SK-N-SH (cell line): ENCODE measurements at regions of chr5 and their contacts with region 1.

Region 1: DNA sequence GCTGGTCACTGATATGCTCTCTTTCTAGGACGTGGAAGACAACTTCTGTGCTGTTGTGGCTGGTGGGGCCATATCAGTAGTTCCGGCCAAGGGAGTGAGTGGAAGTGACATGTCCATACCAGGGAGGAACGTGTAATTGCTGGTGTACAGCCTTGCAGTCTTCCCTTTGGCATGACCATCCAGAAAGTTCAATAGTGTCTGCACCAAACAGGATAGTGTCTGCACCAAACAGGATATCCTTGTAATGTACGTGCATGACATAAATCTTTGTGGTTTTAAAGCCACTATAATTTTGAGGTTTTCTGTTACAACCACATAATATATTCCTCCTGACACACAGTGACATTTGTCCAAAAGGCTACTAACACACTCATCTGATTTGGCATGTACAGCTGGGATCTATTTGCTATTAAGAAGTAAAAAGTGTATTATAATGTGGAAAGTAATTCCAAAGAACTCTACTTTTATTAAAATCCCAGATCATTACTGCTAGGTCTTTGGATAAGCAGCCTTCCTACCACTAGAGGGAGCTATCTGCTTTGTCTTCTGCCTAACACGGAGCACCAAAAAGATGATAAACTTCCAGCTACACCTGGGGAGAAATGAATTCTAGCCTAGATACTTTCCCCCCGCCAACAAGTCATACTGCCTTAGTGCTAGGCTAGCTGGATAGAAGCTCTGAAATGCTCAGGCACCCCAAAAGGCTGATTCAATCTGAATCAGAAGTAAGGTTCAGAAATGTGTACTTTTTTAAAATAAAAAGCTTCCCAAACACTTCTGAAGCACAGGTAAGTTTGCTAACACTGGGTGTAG is 52.7 kb downstream of the RNF145 start:
- DNase-seq: peak; percentile 68
- H3K4me3 ChIP-seq: peak overlapping the region in 1 of 2 experiments; percentile 27; a peak in 1 of 4 replicates
- H3K27ac ChIP-seq: no peak overlapping the region
- H3K4me1 ChIP-seq: peaks cover 0 to 18% of the 10 kb centered on the region in 2 experiments; a peak in 3 of 4 replicates
- H3K27me3 ChIP-seq: no peaks in the 10 kb centered on the region
- CTCF ChIP-seq: peak; percentile 94
- EP300 ChIP-seq: no peak
- RAD21 ChIP-seq: peak; percentile 91

Region 2: GRCh38 chr5:159094745-159095144 is 61.9 kb before region 1 on chr5:
- CTCF ChIA-PET with region 1: no interaction called
- POLR2A ChIA-PET with region 1: no interaction called
- DNase-seq: peak; percentile 57
- H3K4me3 ChIP-seq: no peak overlapping the region
- H3K27ac ChIP-seq: no peak overlapping the region
- H3K4me1 ChIP-seq: peaks cover 5 to 9% of the 10 kb centered on the region in 2 experiments; a peak in 3 of 4 replicates
- H3K27me3 ChIP-seq: no peaks in the 10 kb centered on the region
- CTCF ChIP-seq: no peak
- EP300 ChIP-seq: no peak
- RAD21 ChIP-seq: no peak

Region 3: GRCh38 chr5:159171274-159171673 is 14.6 kb after region 1 on chr5:
- CTCF ChIA-PET with region 1: interaction called, 28 read pairs
- POLR2A ChIA-PET with region 1: no interaction called
- DNase-seq: no peak
- H3K4me3 ChIP-seq: no peak overlapping the region
- H3K27ac ChIP-seq: no peak overlapping the region
- H3K4me1 ChIP-seq: peaks cover 0 to 13% of the 10 kb centered on the region in 2 experiments; a peak in 2 of 4 replicates
- H3K27me3 ChIP-seq: no peaks in the 10 kb centered on the region
- CTCF ChIP-seq: no peak
- EP300 ChIP-seq: no peak
- RAD21 ChIP-seq: no peak

Region 4: GRCh38 chr5:159207686-159208513 is 51.3 kb after region 1 on chr5:
- CTCF ChIA-PET with region 1: interaction called, 15 read pairs
- POLR2A ChIA-PET with region 1: interaction called, 3 read pairs
- DNase-seq: peak; percentile 84
- H3K4me3 ChIP-seq: peak overlapping the region; percentile 78 to 88
- H3K27ac ChIP-seq: peak overlapping the region; percentile 90 to 98
- H3K4me1 ChIP-seq: peaks cover 19 to 51% of the 10 kb centered on the region in 2 experiments; a peak in 3 of 4 replicates
- H3K27me3 ChIP-seq: no peaks in the 10 kb centered on the region
- CTCF ChIP-seq: no peak
- EP300 ChIP-seq: 0 out of 4 replicates have a peak, but pooled peaks of 1 of the 2 experiments have one; percentile 62
- RAD21 ChIP-seq: no peak; the same call in 1 of the 2 replicates

Region 5: GRCh38 chr5:159274676-159275075 is 118.0 kb after region 1 on chr5:
- CTCF ChIA-PET with region 1: interaction called, 10 read pairs
- POLR2A ChIA-PET with region 1: no interaction called
- DNase-seq: no peak
- H3K4me3 ChIP-seq: no peak overlapping the region
- H3K27ac ChIP-seq: no peak overlapping the region
- H3K4me1 ChIP-seq: no peaks in the 10 kb centered on the region
- H3K27me3 ChIP-seq: no peaks in the 10 kb centered on the region
- CTCF ChIP-seq: no peak
- EP300 ChIP-seq: no peak
- RAD21 ChIP-seq: no peak

Region 6: DNA sequence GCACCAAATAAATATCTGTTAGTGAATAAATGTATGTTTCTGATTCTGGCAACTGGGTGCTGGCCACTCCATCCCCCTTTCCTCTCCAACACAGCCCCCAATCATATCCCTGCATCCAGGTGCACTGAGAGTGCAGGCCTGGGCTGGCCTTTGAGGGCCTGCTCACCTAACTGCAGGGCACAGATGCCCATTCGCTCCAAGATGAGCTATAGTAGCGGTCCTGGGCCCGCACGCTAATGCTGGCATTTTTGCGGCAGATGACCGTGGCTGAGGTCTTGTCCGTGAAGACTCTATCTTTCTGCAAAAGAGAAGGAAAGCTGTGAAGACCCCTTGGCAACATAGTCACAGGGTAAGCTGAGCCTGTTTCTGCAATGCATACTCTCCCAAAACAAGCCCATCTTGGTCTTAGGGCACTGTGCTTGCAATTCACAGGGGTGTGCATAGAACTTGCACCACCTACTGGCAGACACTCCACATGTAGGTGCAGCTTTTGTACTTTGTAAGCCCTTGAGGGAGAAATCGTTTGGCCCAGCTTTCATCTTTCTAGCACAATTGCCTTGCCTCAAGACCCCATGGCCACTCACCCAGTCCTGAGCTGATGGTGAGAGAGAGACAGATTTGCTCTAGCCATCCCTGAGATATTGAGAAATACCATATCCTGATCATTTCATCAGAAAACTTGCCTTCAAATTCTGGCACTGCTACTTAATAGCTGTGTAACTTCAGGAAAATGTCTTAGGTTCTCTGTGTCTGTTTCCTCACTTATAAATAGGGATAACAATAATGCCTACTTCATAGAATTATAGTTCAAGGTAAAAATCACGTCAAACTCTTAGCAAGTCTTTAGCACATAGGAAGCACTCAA is 160.1 kb after region 1 on chr5:
- CTCF ChIA-PET with region 1: interaction called, 71 read pairs
- POLR2A ChIA-PET with region 1: interaction called, 3 read pairs
- DNase-seq: peak; percentile 66
- H3K4me3 ChIP-seq: no peak overlapping the region
- H3K27ac ChIP-seq: no peak overlapping the region
- H3K4me1 ChIP-seq: peaks cover 0 to 15% of the 10 kb centered on the region in 2 experiments; a peak in 2 of 4 replicates
- H3K27me3 ChIP-seq: peaks cover 4% of the 10 kb centered on the region; the same call in 1 of the 2 replicates
- CTCF ChIP-seq: peak; percentile 69
- EP300 ChIP-seq: no peak
- RAD21 ChIP-seq: peak; percentile 76